IMR-90 (cell line): ENCODE measurements at regions of chr6 and their contacts with region 1.

Region 1: DNA sequence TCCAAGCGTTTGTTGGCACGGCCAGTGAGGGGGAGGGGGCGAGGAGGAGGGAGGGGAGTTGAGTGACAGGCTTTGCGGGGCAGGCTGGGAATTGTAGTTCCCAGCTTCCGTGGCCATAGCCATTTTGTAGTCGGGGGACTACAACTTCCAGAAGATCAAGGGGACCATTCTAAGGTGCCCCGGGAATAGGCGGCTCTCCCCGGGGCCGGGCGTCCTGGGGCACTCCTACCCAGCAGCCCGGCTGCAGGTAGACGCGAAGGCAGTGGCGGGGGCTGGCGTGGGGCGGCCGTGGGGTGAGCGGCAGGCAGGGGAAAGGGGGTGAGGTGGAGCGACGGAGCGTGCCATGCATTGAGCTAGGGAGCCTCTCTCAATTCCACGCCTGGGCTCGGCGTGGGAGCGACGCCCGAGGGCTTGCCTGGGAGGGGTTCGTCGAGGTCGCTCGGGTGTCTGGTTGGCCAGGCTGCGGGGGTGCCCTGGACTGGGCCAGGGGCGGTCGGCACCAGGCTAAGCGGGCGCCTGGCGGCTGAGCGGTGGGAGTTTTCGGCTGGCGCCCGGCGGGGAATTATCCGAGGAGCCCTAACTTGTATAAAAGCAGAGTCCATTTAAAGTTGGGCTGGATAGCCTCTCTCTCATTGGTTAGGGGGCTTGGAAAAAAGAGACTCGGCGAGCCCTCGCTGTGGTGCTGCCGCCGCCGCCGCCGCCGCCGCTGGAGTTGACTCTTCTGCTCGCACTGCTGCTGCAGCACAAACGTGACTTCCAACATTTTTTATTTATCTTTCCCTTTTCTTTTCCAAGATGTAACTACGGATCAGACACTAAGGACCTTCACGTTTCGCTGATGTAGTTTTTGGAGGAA is at the start of gene JARID2:
- DNase-seq: peak; percentile 98
- ATAC-seq: peak; percentile 70
- H3K4me3 ChIP-seq: peak within 1 kb of the TSS; percentile 69
- H3K27ac ChIP-seq: peak within 1 kb of the TSS; percentile 89
- H3K4me1 ChIP-seq: peaks cover 5% of the 10 kb centered on the region
- H3K27me3 ChIP-seq: no peaks in the 10 kb centered on the region
- CTCF ChIP-seq: no peak; the same call in 1 of the 2 replicates
- POLR2A ChIP-seq: peak; percentile 96
- RAD21 ChIP-seq: peak; percentile 34; the same call in 1 of the 2 replicates
- total RNA-seq, gene JARID2: 12.9 and 13.1 TPM in 2 replicates

Region 2: GRCh38 chr6:14476793-14477531 is 768.6 kb before region 1 on chr6:
- CTCF ChIA-PET with region 1: no interaction called
- POLR2A ChIA-PET with region 1: no interaction called
- dilution Hi-C with region 1: no loop called
- in situ Hi-C with region 1: no loop called
- intact Hi-C with region 1: loop called (anchors 1 kb)
- DNase-seq: peak; percentile 100
- ATAC-seq: peak; percentile 93
- H3K4me3 ChIP-seq: peak overlapping the region; percentile 1; the same call in 1 of the 2 replicates
- H3K27ac ChIP-seq: peak overlapping the region; percentile 57
- H3K4me1 ChIP-seq: peaks cover 22% of the 10 kb centered on the region
- H3K27me3 ChIP-seq: no peaks in the 10 kb centered on the region
- CTCF ChIP-seq: no peak
- POLR2A ChIP-seq: peak; percentile 75
- RAD21 ChIP-seq: peak; percentile 12

Region 3: GRCh38 chr6:14743465-14744211 is 502.0 kb before region 1 on chr6:
- CTCF ChIA-PET with region 1: no interaction called
- POLR2A ChIA-PET with region 1: no interaction called
- dilution Hi-C with region 1: no loop called
- in situ Hi-C with region 1: no loop called
- intact Hi-C with region 1: loop called (anchors 5 kb)
- DNase-seq: peak; percentile 100
- ATAC-seq: peak; percentile 90
- H3K4me3 ChIP-seq: no peak overlapping the region; the same call in 1 of the 2 replicates
- H3K27ac ChIP-seq: peak overlapping the region; percentile 85
- H3K4me1 ChIP-seq: peaks cover 13% of the 10 kb centered on the region
- H3K27me3 ChIP-seq: no peaks in the 10 kb centered on the region
- CTCF ChIP-seq: no peak
- POLR2A ChIP-seq: peak; percentile 46
- RAD21 ChIP-seq: peak; percentile 38

Region 4: DNA sequence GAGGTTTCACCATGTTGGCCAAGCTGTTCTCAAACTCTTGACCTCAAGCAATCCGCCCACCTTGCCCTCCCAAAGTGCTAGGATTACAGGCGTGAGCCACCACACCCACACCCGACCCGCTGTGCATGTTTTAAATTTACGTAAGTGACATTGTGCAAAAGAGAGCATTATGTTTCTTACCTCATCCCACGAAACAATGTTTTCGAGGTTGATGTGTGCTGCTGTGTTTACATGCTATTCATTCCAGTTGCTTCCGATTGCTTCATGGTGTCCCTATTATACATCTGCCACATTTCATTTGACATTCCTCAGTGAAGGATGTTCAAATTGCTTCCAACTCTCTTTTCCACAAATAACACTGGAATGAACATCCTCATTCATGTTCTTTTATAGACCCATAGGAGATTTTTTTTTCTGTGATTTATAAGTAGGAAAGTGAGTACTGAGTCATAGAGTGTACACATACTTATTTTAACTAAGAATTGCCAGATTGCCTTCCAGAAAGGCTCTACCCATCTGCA is 403.6 kb before region 1 on chr6:
- CTCF ChIA-PET with region 1: no interaction called
- POLR2A ChIA-PET with region 1: no interaction called
- dilution Hi-C with region 1: no loop called
- in situ Hi-C with region 1: no loop called
- intact Hi-C with region 1: loop called (anchors 1 kb)
- DNase-seq: peak; percentile 100
- ATAC-seq: peak; percentile 91
- H3K4me3 ChIP-seq: no peak overlapping the region
- H3K27ac ChIP-seq: peak overlapping the region; percentile 59; the same call in 1 of the 2 replicates
- H3K4me1 ChIP-seq: peaks cover 7% of the 10 kb centered on the region
- H3K27me3 ChIP-seq: no peaks in the 10 kb centered on the region
- CTCF ChIP-seq: no peak
- POLR2A ChIP-seq: no peak
- RAD21 ChIP-seq: peak; percentile 12

Region 5: DNA sequence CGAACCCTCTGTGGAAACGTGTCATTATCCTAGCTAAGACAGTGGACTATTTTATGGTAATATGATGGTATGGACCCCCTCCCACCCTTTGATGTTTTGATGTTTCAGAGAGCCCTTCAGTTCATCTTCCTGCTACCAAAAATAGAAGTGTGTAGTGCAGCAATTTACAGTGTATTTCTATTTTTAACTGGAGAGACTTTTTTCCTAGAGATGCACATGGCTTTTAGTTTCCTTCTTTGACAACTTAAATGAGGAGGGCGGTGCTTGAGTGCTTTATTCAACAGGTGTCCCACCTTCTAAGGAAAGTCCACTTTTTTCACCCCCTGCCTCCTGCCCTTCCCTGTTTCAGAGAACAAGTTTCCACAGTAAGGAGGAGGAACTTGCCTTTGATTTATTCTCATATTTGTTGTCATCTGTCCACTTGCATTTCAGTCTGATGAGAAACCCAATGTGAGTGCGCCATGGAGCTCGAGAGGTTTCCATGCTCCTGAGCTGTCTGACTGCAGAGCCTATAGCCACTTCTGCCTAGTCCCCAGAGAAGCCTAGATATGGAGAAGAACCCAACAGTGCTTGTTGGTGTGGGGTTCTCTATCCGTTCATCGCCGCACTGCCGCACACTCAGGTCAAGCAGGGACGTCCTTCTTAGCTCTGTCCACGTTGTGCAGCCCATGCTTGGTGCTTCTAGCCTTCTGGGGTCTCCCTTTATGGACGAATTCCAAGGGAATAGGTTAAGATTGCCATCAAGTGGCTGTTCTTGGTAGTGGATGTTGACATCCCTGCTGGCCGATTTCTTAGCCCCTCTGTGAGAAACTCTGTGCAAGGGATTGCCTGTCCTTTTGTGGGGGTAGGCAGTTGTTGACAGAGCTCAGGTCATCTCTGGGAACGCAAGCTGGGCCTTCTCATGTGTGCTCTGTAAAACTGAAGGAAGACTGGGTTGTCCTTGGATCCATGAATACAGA is 144.5 kb after region 1 on chr6:
- CTCF ChIA-PET with region 1: no interaction called
- POLR2A ChIA-PET with region 1: interaction called, 12 read pairs
- dilution Hi-C with region 1: no loop called
- in situ Hi-C with region 1: loop called (anchors 10 kb)
- intact Hi-C with region 1: loop called (anchors 2 kb)
- DNase-seq: peak; percentile 66
- ATAC-seq: peak; percentile 73
- H3K4me3 ChIP-seq: no peak overlapping the region
- H3K27ac ChIP-seq: no peak overlapping the region
- H3K4me1 ChIP-seq: peaks cover 28% of the 10 kb centered on the region
- H3K27me3 ChIP-seq: no peaks in the 10 kb centered on the region
- CTCF ChIP-seq: peak; percentile 69
- POLR2A ChIP-seq: no peak
- RAD21 ChIP-seq: peak; percentile 86

Region 6: GRCh38 chr6:15491255-15491985 is 245.8 kb after region 1 on chr6:
- CTCF ChIA-PET with region 1: interaction called, 4 read pairs
- POLR2A ChIA-PET with region 1: no interaction called
- dilution Hi-C with region 1: no loop called
- in situ Hi-C with region 1: no loop called
- intact Hi-C with region 1: loop called (anchors 1 kb)
- DNase-seq: peak; percentile 78
- ATAC-seq: peak; percentile 91
- H3K4me3 ChIP-seq: no peak overlapping the region
- H3K27ac ChIP-seq: peak overlapping the region; percentile 30; the same call in 1 of the 2 replicates
- H3K4me1 ChIP-seq: peaks cover 13% of the 10 kb centered on the region
- H3K27me3 ChIP-seq: no peaks in the 10 kb centered on the region
- CTCF ChIP-seq: peak; percentile 91
- POLR2A ChIP-seq: no peak
- RAD21 ChIP-seq: peak; percentile 90